AG04449 (cell line): ENCODE measurements at regions of chr9 and their contacts with region 1.

Region 1: DNA sequence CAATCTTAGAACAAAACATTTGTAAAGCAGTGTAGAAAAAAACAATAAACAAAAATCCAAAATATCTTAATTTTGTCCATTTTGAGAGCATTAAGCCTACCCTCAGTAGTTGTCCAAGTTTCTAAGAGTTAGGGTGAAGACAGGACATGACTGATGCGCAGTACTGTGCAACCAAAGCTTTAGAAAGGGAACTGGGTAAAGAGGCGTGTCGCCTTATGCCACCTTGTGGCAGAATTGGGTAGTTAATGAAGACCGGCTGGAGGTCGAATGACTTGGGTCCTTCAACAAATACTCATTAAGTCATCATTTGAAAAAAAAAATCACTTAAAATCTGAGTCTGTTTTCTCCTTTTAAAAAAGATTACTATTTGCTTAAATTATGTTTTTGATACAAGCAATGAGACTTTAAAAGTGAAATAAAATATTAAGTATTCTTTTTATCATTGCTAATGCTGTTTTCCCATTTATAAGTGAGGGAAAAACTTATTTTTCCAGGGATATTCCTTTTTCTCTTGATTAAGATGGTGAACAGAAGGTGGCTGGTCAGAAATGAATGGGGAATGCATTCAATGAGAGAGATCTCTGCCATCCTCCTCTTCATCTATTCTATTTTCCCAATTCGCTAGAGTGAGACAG is 3.5 kb upstream of the RNF20 start:
- DNase-seq: no peak
- H3K4me3 ChIP-seq: no peak overlapping the region
- CTCF ChIP-seq: peak; percentile 73

Region 2: DNA sequence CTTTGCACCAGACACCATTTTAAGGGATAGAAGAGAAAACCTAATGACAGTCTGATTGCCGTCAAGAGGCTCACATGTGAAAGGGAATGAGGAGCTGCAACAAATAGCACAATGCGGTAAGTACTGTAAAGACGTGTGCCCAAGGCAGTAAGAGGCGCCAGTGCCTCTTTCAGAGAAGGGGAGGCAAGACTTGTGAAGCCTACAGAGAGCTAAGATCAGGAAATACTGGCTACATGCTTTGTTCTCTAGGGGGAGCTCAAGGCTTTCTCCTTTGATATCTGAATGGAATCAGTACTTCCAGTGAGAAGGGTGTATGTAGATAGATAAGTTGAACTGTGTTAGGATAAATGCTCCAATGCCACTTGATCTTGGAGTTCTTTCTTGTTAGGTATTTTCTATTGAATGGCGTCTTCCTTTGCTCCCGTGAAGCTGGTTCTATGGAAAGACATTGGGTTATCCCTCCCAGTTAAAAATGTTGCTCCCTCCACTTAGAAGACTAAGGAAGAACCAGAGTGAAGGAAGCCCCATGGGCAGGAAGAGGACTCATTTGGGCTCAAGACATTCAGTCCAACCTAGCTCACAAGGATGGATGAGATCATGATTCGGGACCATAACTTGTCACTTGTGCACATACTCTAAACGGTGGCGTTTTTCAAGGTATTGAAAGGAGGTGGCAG is 71.1 kb before region 1 on chr9:
- CTCF ChIA-PET with region 1: interaction called, 975 read pairs
- POLR2A ChIA-PET with region 1: interaction called, 5 read pairs
- DNase-seq: no peak
- H3K4me3 ChIP-seq: no peak overlapping the region
- CTCF ChIP-seq: peak; percentile 86

Region 3: GRCh38 chr9:101486693-101487442 is 43.3 kb before region 1 on chr9:
- CTCF ChIA-PET with region 1: interaction called, 25 read pairs
- POLR2A ChIA-PET with region 1: interaction called, 6 read pairs
- DNase-seq: no peak
- H3K4me3 ChIP-seq: peak overlapping the region; percentile 71
- CTCF ChIP-seq: peak; percentile 38

Region 4: GRCh38 chr9:101514071-101514470 is 16.1 kb before region 1 on chr9:
- CTCF ChIA-PET with region 1: interaction called, 18 read pairs
- POLR2A ChIA-PET with region 1: no interaction called
- DNase-seq: no peak
- H3K4me3 ChIP-seq: no peak overlapping the region
- CTCF ChIP-seq: no peak